ENCODE measurements at regions of chr2 and their contacts with region 1.

Region 1: DNA sequence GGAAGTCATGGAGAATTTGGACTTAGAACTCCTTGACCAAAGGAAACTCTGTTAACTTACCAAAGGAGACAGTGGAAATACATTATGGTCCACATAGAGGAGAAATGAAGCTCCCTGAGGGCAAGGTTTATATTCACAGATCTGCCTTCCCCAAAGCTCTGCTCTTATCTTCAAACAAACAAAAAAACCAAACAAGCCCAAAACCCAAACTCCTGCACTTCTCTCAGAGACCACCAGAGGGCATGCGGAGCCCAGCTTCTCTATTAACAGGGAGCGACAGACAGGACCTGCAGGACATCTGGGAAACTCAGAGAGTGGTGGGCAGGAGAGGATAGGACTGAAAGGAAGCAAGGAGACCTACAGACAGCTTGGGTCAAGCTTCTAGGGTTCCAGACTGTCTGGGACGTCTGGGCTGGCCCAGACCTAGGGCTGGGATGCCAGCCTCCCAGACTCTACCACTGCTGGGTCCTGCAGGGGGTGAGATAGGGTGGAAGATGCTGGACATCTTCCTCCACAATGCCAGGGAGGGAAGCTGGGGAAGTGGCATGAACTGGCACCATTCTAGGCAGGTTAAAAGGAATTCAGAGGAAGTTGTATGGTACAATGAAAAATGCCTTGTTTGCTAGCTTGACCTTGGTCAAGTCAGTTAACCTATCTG is 4.0 kb upstream of the WNT10A start:
- DNase-seq: peak; percentile 54 to 70 (median 57)
- ATAC-seq: peak; percentile 76
- H3K4me3 ChIP-seq: no peak overlapping the region
- H3K27ac ChIP-seq: no peak overlapping the region
- H3K4me1 ChIP-seq: peaks cover 0 to 15% of the 10 kb centered on the region in 2 experiments; a peak in 3 of 5 replicates
- H3K27me3 ChIP-seq: peaks cover 0 to 33% of the 10 kb centered on the region in 2 experiments; a peak in 3 of 5 replicates
- CTCF ChIP-seq: peak; percentile 82 to 85 (median 84)
- EP300 ChIP-seq: no peak
- POLR2A ChIP-seq: no peak
- RAD21 ChIP-seq: peak; percentile 64 to 82

Region 2: DNA sequence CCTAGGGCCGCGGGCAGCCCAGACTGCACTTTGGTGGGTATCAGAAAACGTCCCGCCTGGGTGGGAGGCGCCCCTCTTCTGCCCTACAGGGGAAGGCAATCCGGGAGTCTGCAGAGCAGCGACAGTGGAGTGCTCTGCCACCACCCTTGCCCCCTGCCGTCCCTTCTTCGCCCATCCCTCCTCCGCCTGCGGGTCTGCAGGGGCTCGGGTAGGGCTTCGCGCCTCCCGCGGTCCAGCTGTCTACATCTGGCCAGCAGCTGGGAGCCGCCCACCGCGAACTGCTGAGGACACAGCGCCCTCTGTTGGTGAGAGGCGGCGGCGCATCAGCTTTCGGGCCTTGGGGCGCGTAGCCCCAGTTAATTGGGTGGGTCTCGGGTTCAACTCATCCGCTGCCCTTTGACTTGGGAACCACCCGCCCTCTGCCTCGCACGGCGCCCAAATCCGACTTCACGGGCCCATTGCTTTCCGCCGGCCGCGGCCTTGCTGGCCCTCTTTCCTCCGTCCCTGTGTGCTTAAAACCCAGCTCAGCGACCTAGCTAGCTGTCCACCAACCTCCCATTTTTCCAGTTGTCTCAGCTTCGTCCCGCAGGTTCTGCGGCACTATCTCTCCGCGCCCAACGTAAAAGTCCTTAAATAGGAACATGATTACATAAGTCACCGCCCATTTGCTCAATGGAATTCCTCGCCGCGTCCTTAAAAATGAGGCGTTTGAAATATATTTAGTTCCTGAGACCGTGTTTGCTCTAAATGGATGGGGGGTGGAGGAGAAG is 21.6 kb after region 1 on chr2:
- CTCF ChIA-PET with region 1: interaction called, 5 read pairs
- POLR2A ChIA-PET with region 1: no interaction called
- in situ Hi-C with region 1: no loop called
- intact Hi-C with region 1: loop called (anchors 1 kb)
- DNase-seq: peak; percentile 72 to 81 (median 77)
- ATAC-seq: peak; percentile 96
- H3K4me3 ChIP-seq: no peak overlapping the region
- H3K27ac ChIP-seq: no peak overlapping the region
- H3K4me1 ChIP-seq: peaks cover 0 to 22% of the 10 kb centered on the region in 2 experiments; a peak in 2 of 5 replicates
- H3K27me3 ChIP-seq: peaks cover 0 to 24% of the 10 kb centered on the region in 2 experiments; a peak in 4 of 5 replicates
- CTCF ChIP-seq: peak; percentile 74 to 85 (median 77)
- EP300 ChIP-seq: no peak
- POLR2A ChIP-seq: no peak
- RAD21 ChIP-seq: peak; percentile 53 to 78

Region 3: DNA sequence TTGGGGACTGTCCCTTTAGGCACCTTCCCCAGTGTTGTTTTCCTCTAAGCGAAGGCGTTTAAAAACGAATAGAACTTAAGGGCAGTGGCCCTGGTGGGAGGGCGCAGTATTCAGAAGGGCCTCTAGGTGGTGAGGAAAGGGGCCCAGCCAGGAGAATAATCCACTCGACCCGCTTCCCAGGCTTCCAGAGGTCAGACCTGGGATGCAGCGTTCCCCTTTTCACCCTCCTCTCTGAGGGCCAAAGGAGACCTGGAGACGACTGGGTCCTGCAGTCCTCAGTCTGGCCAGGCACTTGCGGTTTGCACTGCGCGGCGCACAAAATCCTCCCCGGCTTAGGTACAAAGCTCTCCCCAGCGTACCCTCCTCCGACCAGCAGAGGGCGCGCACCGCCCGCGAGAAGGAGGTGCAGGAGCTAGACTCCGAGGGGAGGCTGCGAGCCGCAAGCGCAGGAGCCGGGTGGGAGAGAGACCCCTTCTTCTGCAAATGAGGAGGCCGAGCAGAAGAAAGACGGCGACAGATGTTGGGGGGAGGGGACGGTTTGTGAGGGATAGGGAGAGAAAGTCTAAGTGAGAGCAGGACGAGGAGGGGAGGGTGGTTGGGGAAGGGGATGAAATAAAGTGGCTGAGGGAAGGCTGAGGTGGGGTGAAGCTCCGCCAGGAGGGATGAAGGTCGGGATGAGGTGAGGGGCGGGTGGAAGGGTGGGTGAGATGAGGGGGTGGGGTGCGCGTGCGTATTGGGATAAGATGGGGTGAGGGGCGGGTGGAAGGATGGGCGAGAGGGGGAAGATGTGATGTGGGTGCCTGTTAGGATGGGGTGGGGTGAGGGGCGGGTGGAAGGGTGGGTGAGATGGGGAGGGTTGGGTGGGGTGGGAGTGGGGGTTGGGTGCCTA is 103.4 kb after region 1 on chr2:
- CTCF ChIA-PET with region 1: interaction called, 3 read pairs
- POLR2A ChIA-PET with region 1: interaction called, 3 read pairs
- in situ Hi-C with region 1: no loop called
- intact Hi-C with region 1: loop called (anchors 5 kb)
- DNase-seq: peak; percentile 73 to 83 (median 75)
- ATAC-seq: peak; percentile 100
- H3K4me3 ChIP-seq: no peak overlapping the region
- H3K27ac ChIP-seq: no peak overlapping the region
- H3K4me1 ChIP-seq: peaks cover 0 to 16% of the 10 kb centered on the region in 2 experiments; a peak in 3 of 5 replicates
- H3K27me3 ChIP-seq: peaks cover 0 to 16% of the 10 kb centered on the region in 2 experiments; a peak in 2 of 5 replicates
- CTCF ChIP-seq: peak; percentile 72 to 92 (median 91)
- EP300 ChIP-seq: no peak
- POLR2A ChIP-seq: no peak
- RAD21 ChIP-seq: peak; percentile 77 to 78